ENCODE measurements at regions of chr19 and their contacts with region 1.

Region 1: GRCh38 chr19:5891938-5892771 is 11.4 kb downstream of the NDUFA11 start:
- DNase-seq: peak in 1 of 9 donors; percentile 38
- ATAC-seq: peak; percentile 57
- H3K4me3 ChIP-seq: no peak overlapping the region
- H3K4me3 Mint-ChIP-seq: no peak overlapping the region
- H3K27ac ChIP-seq: no peak overlapping the region
- H3K27ac Mint-ChIP-seq: peak overlapping the region in 3 of 9 donors; percentile 20 to 43 (median 28)
- H3K4me1 ChIP-seq: no peaks in the 10 kb centered on the region
- H3K4me1 Mint-ChIP-seq: peaks cover 0 to 4% (median 0%) of the 10 kb centered on the region in 7 donors
- H3K27me3 ChIP-seq: no peaks in the 10 kb centered on the region
- H3K27me3 Mint-ChIP-seq: peaks cover 0 to 12% (median 5%) of the 10 kb centered on the region in 5 donors

Region 2: DNA sequence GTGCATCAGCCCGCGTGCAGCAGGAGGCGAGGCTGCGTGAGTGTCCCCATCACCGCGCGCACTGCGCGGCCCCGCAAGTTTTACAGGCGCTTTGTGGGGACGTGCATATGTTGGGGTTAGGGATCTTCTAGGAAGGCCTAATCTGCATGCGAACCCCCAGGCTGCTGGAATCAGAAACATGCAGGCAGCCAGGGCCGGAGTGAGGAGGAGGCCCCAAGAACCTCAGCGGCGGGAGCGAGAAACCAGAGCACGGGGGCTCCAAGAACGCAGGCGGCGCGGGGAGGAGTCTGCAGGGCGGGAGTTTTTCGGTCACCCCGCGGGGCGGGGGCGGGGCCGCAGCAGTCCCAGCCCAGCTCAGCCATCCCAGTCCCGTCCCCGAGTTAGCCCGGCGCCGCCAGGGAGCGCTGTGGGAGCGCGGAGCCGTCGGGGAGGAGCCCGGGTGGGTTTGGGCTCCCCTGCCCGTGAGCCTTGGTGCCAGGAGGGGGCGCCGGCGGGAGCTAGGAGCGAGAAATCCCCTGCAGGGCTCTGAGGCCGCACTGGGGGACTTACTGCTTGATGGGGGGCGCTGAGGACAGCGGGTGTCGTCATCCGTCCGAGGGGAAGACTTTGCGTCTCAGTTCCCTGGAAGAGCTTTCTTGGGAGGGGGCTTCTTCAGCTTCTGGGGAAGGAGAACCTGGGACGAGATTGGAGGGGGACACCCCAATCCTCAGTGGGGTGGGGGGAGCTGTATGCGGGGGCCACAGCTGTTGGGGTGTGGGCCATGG is 88.2 kb before region 1 on chr19:
- CTCF ChIA-PET with region 1: interaction called, 5 read pairs
- POLR2A ChIA-PET with region 1: no interaction called
- intact Hi-C with region 1: loop called in 1 of 2 experiments (anchors 1 kb)
- DNase-seq: peak; percentile 89 to 99 (median 93)
- ATAC-seq: peak; percentile 98
- H3K4me3 ChIP-seq: peak overlapping the region; percentile 64
- H3K4me3 Mint-ChIP-seq: peak overlapping the region; percentile 62 to 87 (median 80)
- H3K27ac ChIP-seq: peak overlapping the region; percentile 44
- H3K27ac Mint-ChIP-seq: peak overlapping the region in 8 of 9 donors; percentile 28 to 83 (median 72)
- H3K4me1 ChIP-seq: peaks cover 13 to 20% of the 10 kb centered on the region in 2 donors
- H3K4me1 Mint-ChIP-seq: peaks cover 7 to 24% (median 21%) of the 10 kb centered on the region in 7 donors
- H3K27me3 ChIP-seq: peaks cover 0 to 2% of the 10 kb centered on the region in 2 donors
- H3K27me3 Mint-ChIP-seq: peaks cover 12 to 45% (median 18%) of the 10 kb centered on the region in 5 donors

Region 3: DNA sequence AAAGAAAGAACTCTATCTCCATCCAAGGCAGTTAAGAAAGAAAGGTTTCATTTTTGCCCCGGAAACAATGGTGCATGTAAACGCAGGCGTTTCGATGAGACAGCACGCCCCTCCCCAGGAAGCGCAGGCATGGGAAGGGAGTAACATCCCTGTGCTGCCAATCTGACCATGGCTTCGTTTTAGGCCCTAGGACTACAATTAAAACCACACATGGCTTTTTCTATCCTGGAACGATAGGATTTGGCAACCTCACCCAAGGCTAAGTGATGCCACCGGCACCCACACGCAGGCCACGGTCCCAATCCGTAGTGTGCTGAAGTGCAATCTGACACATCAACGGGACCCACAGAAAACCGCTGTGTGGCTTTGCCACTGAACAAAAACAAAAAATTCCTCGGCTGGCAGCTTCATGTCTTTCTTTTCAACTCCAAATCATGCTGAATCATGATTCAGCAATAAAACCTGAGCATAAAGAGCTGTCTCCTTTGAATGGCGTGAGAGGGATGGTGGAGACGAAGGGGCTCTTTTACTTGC is 61.6 kb after region 1 on chr19:
- CTCF ChIA-PET with region 1: no interaction called
- POLR2A ChIA-PET with region 1: no interaction called
- intact Hi-C with region 1: no loop called
- DNase-seq: peak in 8 of 9 donors; percentile 16 to 37 (median 32)
- ATAC-seq: peak; percentile 45
- H3K4me3 ChIP-seq: peak overlapping the region; percentile 17
- H3K4me3 Mint-ChIP-seq: peak overlapping the region; percentile 47 to 81 (median 74)
- H3K27ac ChIP-seq: peak overlapping the region; percentile 55
- H3K27ac Mint-ChIP-seq: peak overlapping the region; percentile 45 to 97 (median 89)
- H3K4me1 ChIP-seq: peaks cover 30 to 73% of the 10 kb centered on the region in 2 donors
- H3K4me1 Mint-ChIP-seq: peaks cover 67 to 99% (median 92%) of the 10 kb centered on the region in 7 donors
- H3K27me3 ChIP-seq: no peaks in the 10 kb centered on the region
- H3K27me3 Mint-ChIP-seq: no peaks in the 10 kb centered on the region

Measured in naive thymus-derived CD4-positive, alpha-beta T cell (primary cell).